Activated CD4-positive, alpha-beta memory T cell treated with anti-CD3 and anti-CD28 coated beads for 36 hours (primary cell): ENCODE measurements at regions of chr15 and their contacts with region 1.

Region 1: DNA sequence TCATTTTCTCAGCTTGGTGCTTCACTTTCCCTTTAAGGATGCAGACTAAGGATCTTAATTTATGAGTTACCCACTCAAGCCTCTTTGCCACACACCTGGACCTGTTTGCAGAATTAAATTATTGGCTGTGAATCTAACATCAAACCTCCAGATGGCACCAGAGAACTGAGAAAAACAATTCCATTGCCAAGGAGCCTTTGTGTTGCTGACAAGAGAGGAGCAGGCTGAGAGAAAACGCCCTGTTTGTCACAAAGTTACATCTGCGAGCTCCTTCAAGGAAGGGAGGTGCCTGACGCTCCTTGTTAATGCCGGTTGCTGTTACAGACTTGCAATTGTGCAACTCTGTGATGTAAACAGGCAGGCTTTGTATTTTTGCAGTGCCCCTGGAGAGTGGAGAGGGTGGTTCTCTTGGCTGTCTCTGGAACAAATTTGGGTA is 36.3 kb upstream of the TMC3 start:
- DNase-seq: peak; percentile 11
- H3K4me3 Mint-ChIP-seq: no peak overlapping the region
- H3K27ac Mint-ChIP-seq: no peak overlapping the region
- H3K4me1 Mint-ChIP-seq: peaks cover 9% of the 10 kb centered on the region
- H3K27me3 Mint-ChIP-seq: peaks cover 20% of the 10 kb centered on the region

Region 2: DNA sequence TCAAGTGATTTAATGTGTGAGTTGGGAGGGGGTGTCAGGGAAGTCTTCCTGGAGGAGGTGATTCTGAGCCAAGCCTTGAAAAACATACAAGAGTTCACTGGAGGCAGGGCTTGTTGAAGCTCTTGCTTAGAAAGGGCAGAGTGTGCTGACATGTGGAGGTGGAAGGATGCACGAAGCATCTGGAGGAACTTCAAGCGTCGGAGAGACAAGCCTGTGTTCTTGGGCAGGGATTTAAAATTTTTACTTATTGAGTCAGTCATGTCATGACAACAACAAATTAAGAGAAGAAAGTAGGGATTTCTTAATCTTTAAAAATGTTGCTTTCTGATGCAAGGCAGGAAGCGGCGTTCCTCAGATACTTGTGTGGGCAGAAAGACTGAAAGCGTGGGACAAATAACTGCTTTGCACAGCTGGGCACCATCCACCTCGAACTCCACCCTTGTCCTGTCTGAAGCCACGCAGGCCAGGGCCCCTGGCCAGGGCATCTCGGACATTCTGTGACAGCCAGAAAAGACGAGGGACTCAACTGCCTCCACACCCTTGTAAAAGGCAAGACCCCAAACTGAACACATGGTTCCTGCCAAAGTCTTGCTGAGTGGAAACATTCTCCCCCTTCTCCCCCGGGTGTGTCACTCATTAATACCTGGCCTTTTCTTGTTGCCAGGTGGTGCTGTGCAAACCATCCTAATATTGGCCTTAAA is 220.6 kb before region 1 on chr15:
- CTCF ChIA-PET with region 1: no interaction called
- POLR2A ChIA-PET with region 1: no interaction called
- intact Hi-C with region 1: loop called (anchors 5 kb)
- DNase-seq: no peak
- H3K4me3 Mint-ChIP-seq: no peak overlapping the region
- H3K27ac Mint-ChIP-seq: no peak overlapping the region
- H3K4me1 Mint-ChIP-seq: no peaks in the 10 kb centered on the region
- H3K27me3 Mint-ChIP-seq: peaks cover 13% of the 10 kb centered on the region

Region 3: GRCh38 chr15:81388436-81388770 is 21.9 kb before region 1 on chr15:
- CTCF ChIA-PET with region 1: interaction called, 4 read pairs
- POLR2A ChIA-PET with region 1: no interaction called
- intact Hi-C with region 1: loop called (anchors 2 kb)
- DNase-seq: no peak
- H3K4me3 Mint-ChIP-seq: no peak overlapping the region
- H3K27ac Mint-ChIP-seq: no peak overlapping the region
- H3K4me1 Mint-ChIP-seq: peaks cover 4% of the 10 kb centered on the region
- H3K27me3 Mint-ChIP-seq: no peaks in the 10 kb centered on the region